ENCODE measurements at regions of chr1 and their contacts with region 1.

Region 1: DNA sequence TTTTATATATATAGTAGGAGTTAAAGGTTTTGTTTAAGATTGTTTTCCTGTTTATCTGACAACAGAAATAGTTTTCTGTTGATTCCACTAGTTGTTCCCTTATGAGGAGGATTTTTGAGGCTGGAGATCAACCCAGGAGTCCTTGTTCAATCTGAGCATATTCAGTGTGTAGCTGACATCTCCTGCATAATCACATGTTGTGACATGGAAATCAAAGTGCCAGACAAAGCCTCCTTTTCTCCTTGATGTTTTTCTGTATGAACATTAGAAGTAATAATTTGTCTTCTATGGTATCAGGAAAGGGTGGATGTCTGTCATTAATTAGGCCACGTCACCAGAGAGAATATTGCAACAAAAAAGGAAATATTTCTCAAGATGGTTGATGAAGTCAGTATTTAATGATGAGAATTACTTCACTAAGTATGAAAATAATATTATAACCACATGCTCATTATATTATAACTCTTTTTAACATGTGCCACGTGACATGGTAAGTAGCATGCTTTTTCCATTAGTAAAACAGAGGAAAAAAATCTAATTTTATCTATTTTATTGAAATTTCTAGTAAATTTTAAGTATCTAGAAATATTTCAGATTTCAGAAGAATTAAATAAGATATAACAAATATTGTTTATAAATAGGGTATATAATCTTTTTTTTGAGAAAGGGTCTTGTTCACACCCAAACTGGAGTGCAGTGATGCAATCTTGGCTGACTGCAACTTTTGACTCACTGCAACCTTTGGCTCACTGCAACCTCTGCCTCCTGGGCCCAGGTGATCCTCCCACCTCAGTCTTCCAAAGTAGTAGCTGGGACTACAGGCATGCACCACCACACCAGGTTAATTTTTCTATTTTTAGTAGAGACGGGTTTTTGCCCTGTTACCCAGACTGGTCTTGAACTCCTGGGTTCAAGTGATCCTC is 223.5 kb downstream of the HMCN1 start:
- DNase-seq: no peak
- H3K4me3 Mint-ChIP-seq: no peak overlapping the region
- H3K27ac Mint-ChIP-seq: no peak overlapping the region
- H3K4me1 Mint-ChIP-seq: no peaks in the 10 kb centered on the region
- H3K27me3 Mint-ChIP-seq: no peaks in the 10 kb centered on the region

Region 2: GRCh38 chr1:185942961-185943360 is 14.7 kb before region 1 on chr1:
- intact Hi-C with region 1: loop called (anchors 1 kb)
- DNase-seq: no peak
- H3K4me3 Mint-ChIP-seq: no peak overlapping the region
- H3K27ac Mint-ChIP-seq: no peak overlapping the region
- H3K4me1 Mint-ChIP-seq: no peaks in the 10 kb centered on the region
- H3K27me3 Mint-ChIP-seq: no peaks in the 10 kb centered on the region

Measured in activated T-helper 2 cell treated with anti-CD3 and anti-CD28 coated beads, Interferon-gamma antibody, Interleukin-2, Interleukin-4, amounts not matched to agents 10 μg/mL and 5 μg/mL and 100 μg/mL, durations not matched to agents 14 hours and 24 hours and 36 hours (primary cell).